CD14-positive monocyte (primary cell): ENCODE measurements at regions of chr7 and their contacts with region 1.

Region 1: DNA sequence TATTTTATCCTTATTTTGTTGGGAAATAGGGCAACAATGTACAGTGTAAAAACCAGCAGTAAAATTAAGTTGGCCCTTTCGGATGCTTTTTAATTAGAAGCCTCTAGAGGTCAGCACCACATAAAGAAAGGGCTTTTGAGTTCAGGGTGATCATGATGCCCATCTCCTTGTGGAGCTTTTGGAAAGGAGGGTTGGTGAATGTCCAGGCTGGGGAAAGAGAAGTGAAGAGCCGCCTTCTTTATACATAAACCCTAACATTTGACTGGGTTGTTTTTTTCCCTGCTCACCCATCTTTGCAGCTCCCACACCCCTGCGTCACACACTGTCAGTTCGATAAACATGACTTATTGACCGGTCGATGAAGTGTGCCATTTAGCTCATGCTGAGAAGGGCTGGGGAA is 29.8 kb downstream of the MTURN start:
- DNase-seq: peak; percentile 63 to 77 (median 76)
- H3K4me3 ChIP-seq: no peak overlapping the region
- H3K4me3 Mint-ChIP-seq: peak overlapping the region in 1 of 2 donors; percentile 50
- H3K27ac ChIP-seq: peak overlapping the region in 1 of 2 donors; percentile 68
- H3K27ac Mint-ChIP-seq: peak overlapping the region; percentile 5 to 73 (median 37)
- H3K4me1 ChIP-seq: peaks cover 65 to 67% of the 10 kb centered on the region in 2 donors
- H3K4me1 Mint-ChIP-seq: peaks cover 74% of the 10 kb centered on the region
- H3K27me3 ChIP-seq: no peaks in the 10 kb centered on the region
- H3K27me3 Mint-ChIP-seq: peaks cover 0 to 1% (median 0%) of the 10 kb centered on the region in 3 donors
- CTCF ChIP-seq: peak; percentile 78

Region 2: GRCh38 chr7:30041521-30042269 is 122.9 kb before region 1 on chr7:
- intact Hi-C with region 1: no loop called
- DNase-seq: no peak
- H3K4me3 ChIP-seq: no peak overlapping the region
- H3K4me3 Mint-ChIP-seq: no peak overlapping the region
- H3K27ac ChIP-seq: no peak overlapping the region
- H3K27ac Mint-ChIP-seq: peak overlapping the region in 1 of 7 donors; percentile 11
- H3K4me1 ChIP-seq: no peaks in the 10 kb centered on the region
- H3K4me1 Mint-ChIP-seq: peaks cover 4% of the 10 kb centered on the region
- H3K27me3 ChIP-seq: no peaks in the 10 kb centered on the region
- H3K27me3 Mint-ChIP-seq: peaks cover 0 to 2% (median 0%) of the 10 kb centered on the region in 3 donors
- CTCF ChIP-seq: no peak

Region 3: GRCh38 chr7:30225863-30226613 is 61.5 kb after region 1 on chr7:
- intact Hi-C with region 1: loop called in 1 of 2 experiments (anchors 10 kb)
- DNase-seq: peak; percentile 97 to 99 (median 99)
- H3K4me3 ChIP-seq: peak overlapping the region in 1 of 3 experiments; percentile 45
- H3K4me3 Mint-ChIP-seq: peak overlapping the region; percentile 28 to 87
- H3K27ac ChIP-seq: peak overlapping the region; percentile 89 to 95
- H3K27ac Mint-ChIP-seq: peak overlapping the region; percentile 97 to 99 (median 99)
- H3K4me1 ChIP-seq: peaks cover 46 to 50% of the 10 kb centered on the region in 2 donors
- H3K4me1 Mint-ChIP-seq: peaks cover 48% of the 10 kb centered on the region
- H3K27me3 ChIP-seq: no peaks in the 10 kb centered on the region
- H3K27me3 Mint-ChIP-seq: peaks cover 0 to 7% (median 3%) of the 10 kb centered on the region in 3 donors
- CTCF ChIP-seq: no peak

Region 4: GRCh38 chr7:30348083-30348560 is 183.6 kb after region 1 on chr7:
- intact Hi-C with region 1: loop called in 1 of 2 experiments (anchors 10 kb)
- DNase-seq: peak; percentile 76 to 90 (median 83)
- H3K4me3 ChIP-seq: peak overlapping the region in 1 of 3 experiments; percentile 48
- H3K4me3 Mint-ChIP-seq: peak overlapping the region; percentile 4 to 74
- H3K27ac ChIP-seq: peak overlapping the region in 1 of 2 donors; percentile 89
- H3K27ac Mint-ChIP-seq: peak overlapping the region; percentile 83 to 93 (median 90)
- H3K4me1 ChIP-seq: peaks cover 60 to 82% of the 10 kb centered on the region in 2 donors
- H3K4me1 Mint-ChIP-seq: peaks cover 69% of the 10 kb centered on the region
- H3K27me3 ChIP-seq: no peaks in the 10 kb centered on the region
- H3K27me3 Mint-ChIP-seq: no peaks in the 10 kb centered on the region
- CTCF ChIP-seq: no peak

Region 5: DNA sequence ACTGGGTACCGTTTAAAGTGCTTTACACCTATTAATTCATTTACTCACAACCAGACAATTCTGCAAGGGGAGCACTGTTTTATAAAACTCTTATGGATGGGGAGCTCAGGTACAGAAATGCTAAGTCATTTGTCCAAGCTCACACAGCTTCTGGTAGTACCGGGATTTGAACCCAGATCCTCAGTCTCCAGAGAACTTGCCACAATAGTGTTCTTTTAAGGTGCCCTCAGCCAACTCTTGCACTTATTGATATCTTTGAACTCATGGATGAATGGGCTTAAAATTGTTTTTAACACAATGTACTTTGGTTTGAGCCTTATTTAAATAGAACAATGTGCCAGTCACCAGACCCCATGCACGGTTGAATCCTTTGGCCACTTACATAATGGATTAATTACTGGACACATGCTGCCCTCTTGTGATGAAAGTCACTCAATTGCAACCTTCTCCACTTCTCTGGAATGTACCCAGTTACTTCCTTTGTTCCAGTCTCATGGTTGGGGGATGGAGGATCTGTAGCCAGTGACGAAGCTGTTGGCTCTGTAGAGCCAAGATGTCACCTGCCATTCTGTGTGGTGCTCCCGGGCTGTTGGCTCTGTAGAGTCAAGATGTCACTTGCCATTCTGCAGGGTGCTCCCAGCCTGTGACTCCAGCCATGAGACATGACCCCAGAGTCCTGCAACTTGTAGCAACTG is 248.4 kb after region 1 on chr7:
- intact Hi-C with region 1: loop called in 1 of 2 experiments (anchors 5 kb)
- DNase-seq: peak; percentile 46 to 75 (median 69)
- H3K4me3 ChIP-seq: no peak overlapping the region
- H3K4me3 Mint-ChIP-seq: no peak overlapping the region
- H3K27ac ChIP-seq: peak overlapping the region in 1 of 2 donors; percentile 7
- H3K27ac Mint-ChIP-seq: peak overlapping the region in 2 of 7 donors; percentile 23 to 64
- H3K4me1 ChIP-seq: peaks cover 19 to 21% of the 10 kb centered on the region in 2 donors
- H3K4me1 Mint-ChIP-seq: peaks cover 42% of the 10 kb centered on the region
- H3K27me3 ChIP-seq: no peaks in the 10 kb centered on the region
- H3K27me3 Mint-ChIP-seq: no peaks in the 10 kb centered on the region
- CTCF ChIP-seq: peak; percentile 69

Region 6: GRCh38 chr7:30422922-30423321 is 258.4 kb after region 1 on chr7:
- intact Hi-C with region 1: loop called in 1 of 2 experiments (anchors 10 kb)
- DNase-seq: no peak
- H3K4me3 ChIP-seq: no peak overlapping the region
- H3K4me3 Mint-ChIP-seq: no peak overlapping the region
- H3K27ac ChIP-seq: no peak overlapping the region
- H3K27ac Mint-ChIP-seq: no peak overlapping the region
- H3K4me1 ChIP-seq: peaks cover 30 to 37% of the 10 kb centered on the region in 2 donors
- H3K4me1 Mint-ChIP-seq: peaks cover 42% of the 10 kb centered on the region
- H3K27me3 ChIP-seq: no peaks in the 10 kb centered on the region
- H3K27me3 Mint-ChIP-seq: no peaks in the 10 kb centered on the region
- CTCF ChIP-seq: no peak